Cardiac septum (tissue), 1 donor: ENCODE measurements at regions of chr18 and their contacts with region 1.

Region 1: GRCh38 chr18:59402432-59403090 is 43.5 kb upstream of the LMAN1 start:
- DNase-seq: no peak

Region 2: GRCh38 chr18:59249205-59249774 is 153.3 kb before region 1 on chr18:
- intact Hi-C with region 1: loop called (anchors 5 kb)
- DNase-seq: no peak

Region 3: DNA sequence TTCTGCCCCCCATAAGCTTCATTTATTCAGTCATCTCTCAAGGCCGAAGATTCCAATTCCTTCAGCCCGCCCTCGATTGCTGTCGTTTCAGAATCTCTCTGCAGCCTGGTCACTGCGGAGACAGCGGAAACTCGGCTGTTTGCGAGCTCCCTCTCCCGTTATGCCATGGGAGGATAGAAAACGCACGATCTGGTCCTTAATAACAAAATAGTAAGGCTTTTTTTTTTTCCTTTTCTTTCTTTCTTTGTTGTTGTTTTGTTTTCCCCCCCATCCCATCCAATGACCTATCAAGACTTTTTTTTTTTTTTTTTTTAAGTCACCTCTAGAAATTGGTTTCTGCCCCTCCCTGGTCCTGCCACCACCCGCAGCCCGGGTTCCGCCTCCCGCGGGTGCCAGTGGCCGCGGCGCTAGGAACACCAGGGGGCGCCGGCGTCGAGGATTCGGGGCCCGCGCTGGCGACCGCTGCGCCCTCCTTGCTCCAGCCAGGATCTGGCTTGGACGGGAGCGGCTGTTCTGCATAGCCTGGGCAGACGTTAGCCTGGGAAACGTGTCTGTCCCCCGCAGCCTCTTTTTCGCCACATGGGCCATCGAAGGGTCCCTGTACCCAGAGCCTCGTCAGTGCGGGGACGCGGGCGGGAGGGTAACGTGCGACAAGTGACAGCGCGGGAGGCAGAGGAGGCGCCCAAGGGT is 94.2 kb before region 1 on chr18:
- intact Hi-C with region 1: loop called (anchors 2 kb)
- DNase-seq: peak; percentile 80